ENCODE measurements at regions of chr12 and their contacts with region 1.

Region 1: GRCh38 chr12:74689071-74689655 is 151.5 kb downstream of the ATXN7L3B start:
- DNase-seq: peak in 3 of 14 experiments; percentile 43 to 56 (median 56)
- ATAC-seq: no peak
- H3K4me3 ChIP-seq: no peak overlapping the region
- H3K4me3 Mint-ChIP-seq: no peak overlapping the region
- H3K27ac ChIP-seq: no peak overlapping the region
- H3K27ac Mint-ChIP-seq: no peak overlapping the region
- H3K4me1 ChIP-seq: no peaks in the 10 kb centered on the region
- H3K4me1 Mint-ChIP-seq: no peaks in the 10 kb centered on the region
- H3K27me3 ChIP-seq: no peaks in the 10 kb centered on the region
- H3K27me3 Mint-ChIP-seq: no peaks in the 10 kb centered on the region
- CTCF ChIP-seq: peak; percentile 49

Region 2: DNA sequence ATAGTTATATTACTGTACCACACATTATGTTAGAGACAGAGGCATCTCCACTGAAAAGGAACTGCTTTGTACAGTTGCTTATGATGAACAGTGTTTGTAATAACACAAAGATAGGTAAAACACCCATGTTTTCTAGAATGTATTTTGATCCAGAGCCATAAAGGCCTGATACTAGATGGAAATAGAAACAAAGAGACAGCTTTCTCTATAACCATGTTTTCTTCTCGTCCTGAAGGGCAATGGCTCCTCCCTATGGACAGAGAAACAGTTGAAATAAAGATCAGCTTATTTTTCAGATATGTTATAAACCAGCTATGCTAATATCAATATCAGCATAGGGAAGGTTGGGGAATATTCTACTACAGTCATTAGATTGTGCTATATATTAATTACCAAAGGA is 42.3 kb before region 1 on chr12:
- CTCF ChIA-PET with region 1: no interaction called
- POLR2A ChIA-PET with region 1: no interaction called
- intact Hi-C with region 1: no loop called
- DNase-seq: peak in 1 of 14 experiments; percentile 0
- ATAC-seq: no peak
- H3K4me3 ChIP-seq: no peak overlapping the region
- H3K4me3 Mint-ChIP-seq: no peak overlapping the region
- H3K27ac ChIP-seq: no peak overlapping the region
- H3K27ac Mint-ChIP-seq: no peak overlapping the region
- H3K4me1 ChIP-seq: no peaks in the 10 kb centered on the region
- H3K4me1 Mint-ChIP-seq: no peaks in the 10 kb centered on the region
- H3K27me3 ChIP-seq: no peaks in the 10 kb centered on the region
- H3K27me3 Mint-ChIP-seq: no peaks in the 10 kb centered on the region
- CTCF ChIP-seq: no peak

Region 3: GRCh38 chr12:75289753-75290152 is 600.6 kb after region 1 on chr12:
- CTCF ChIA-PET with region 1: no interaction called
- POLR2A ChIA-PET with region 1: no interaction called
- intact Hi-C with region 1: loop called in 1 of 2 experiments (anchors 10 kb)
- DNase-seq: peak in 3 of 14 experiments; percentile 12 to 13 (median 13)
- ATAC-seq: no peak
- H3K4me3 ChIP-seq: no peak overlapping the region
- H3K4me3 Mint-ChIP-seq: no peak overlapping the region
- H3K27ac ChIP-seq: no peak overlapping the region
- H3K27ac Mint-ChIP-seq: no peak overlapping the region
- H3K4me1 ChIP-seq: no peaks in the 10 kb centered on the region
- H3K4me1 Mint-ChIP-seq: no peaks in the 10 kb centered on the region
- H3K27me3 ChIP-seq: no peaks in the 10 kb centered on the region
- H3K27me3 Mint-ChIP-seq: no peaks in the 10 kb centered on the region
- CTCF ChIP-seq: no peak

Region 4: DNA sequence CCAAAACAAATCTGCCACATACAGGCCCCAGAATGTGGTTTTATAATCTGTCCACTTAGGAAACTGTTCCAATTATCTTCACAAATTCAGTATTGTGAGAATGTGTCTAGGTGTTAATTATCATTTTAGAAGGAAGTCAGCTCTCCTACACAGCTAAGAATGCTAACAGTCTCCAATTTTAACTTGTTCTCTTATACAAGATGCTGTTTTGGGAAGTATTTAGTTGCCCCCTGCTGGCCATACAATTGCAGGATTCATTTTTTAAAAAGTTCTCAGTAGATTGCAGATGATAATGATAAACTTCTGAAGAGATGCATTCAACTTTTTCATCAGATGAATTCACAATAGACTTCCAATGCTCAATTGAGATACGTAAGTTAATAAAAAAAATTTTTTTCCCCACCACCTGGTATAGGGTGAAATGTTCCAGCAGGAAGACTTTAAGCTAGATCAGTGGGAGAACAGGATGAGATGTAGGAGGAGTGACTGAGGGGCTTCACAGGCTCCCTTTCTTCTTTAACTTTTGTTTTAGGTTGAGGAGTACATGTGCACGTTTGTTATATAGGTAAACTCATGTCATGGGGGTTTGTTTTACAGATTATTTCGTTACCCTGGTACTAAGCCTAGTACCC is 1897.7 kb after region 1 on chr12:
- CTCF ChIA-PET with region 1: no interaction called
- POLR2A ChIA-PET with region 1: no interaction called
- intact Hi-C with region 1: loop called in 1 of 2 experiments (anchors 10 kb)
- DNase-seq: peak in 12 of 14 experiments; percentile 4 to 74 (median 15)
- ATAC-seq: peak; percentile 83
- H3K4me3 ChIP-seq: no peak overlapping the region
- H3K4me3 Mint-ChIP-seq: no peak overlapping the region
- H3K27ac ChIP-seq: no peak overlapping the region
- H3K27ac Mint-ChIP-seq: no peak overlapping the region
- H3K4me1 ChIP-seq: no peaks in the 10 kb centered on the region
- H3K4me1 Mint-ChIP-seq: peaks cover 4% of the 10 kb centered on the region
- H3K27me3 ChIP-seq: no peaks in the 10 kb centered on the region
- H3K27me3 Mint-ChIP-seq: no peaks in the 10 kb centered on the region
- CTCF ChIP-seq: peak; percentile 86

Measured in CD4-positive, alpha-beta T cell (primary cell).